ENCODE measurements at regions of chrX and their contacts with region 1.

Region 1: DNA sequence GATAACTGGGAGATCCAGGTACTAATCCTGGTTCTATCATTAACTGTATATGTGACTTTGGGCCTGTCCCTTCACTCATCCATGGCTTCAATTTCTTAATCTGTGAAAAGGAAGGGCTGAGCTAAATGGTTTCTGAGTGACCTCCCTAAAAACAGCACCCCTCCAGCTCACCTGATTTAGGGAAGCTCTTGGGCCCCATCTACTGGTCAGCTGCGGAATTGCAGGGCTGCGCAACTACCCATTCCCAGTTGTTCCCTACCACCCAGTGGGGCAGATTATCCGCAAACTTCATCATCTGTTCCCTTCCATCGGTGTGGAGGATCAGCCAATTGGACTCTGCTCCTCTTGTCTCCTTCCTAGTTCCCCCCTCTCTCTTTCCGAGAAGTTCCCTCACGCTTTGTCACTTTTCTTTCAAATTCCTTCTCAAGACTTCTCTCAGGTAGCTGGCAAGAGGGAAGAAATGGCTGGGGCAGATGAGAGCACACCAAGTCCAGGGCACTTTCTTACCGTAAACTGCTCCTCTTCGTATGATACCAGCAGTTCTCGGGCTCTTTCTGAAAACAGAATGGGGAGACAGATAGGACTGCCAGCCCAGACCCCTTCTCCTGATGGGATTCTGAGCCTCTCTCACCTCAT is 5.8 kb downstream of the LAS1L start:
- DNase-seq: peak; percentile 8
- H3K4me3 Mint-ChIP-seq: no peak overlapping the region
- H3K27ac Mint-ChIP-seq: no peak overlapping the region
- H3K4me1 Mint-ChIP-seq: peaks cover 14% of the 10 kb centered on the region
- H3K27me3 Mint-ChIP-seq: no peaks in the 10 kb centered on the region

Region 2: DNA sequence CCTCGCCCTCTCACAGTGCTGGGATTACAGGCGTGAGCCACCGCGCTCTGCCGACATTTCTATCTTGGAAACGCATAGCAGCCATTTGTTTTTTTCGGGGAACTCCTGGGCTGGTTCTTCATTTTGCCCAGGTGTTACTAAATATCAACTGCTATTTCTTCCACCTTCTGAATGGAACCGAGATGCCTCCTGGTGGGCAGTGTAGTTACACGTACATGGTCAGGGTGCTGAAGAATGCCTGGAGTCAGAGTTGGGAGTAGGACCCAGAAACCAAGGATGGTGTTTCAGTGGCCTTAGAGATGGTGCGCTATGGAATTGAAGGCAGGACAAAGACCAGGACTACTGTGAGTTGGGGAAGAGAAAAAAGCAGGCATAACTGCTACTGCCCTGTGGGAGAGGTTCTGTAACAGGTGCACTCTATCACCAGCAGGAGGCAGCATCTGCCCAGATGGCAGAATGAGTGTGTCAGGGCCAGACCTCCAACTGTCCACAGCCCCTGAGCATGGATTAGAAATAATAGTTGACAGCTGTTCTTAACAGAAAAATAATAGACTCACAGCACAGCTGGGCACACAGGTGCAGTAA is 634.3 kb before region 1 on chrX:
- intact Hi-C with region 1: loop called (anchors 1 kb)
- DNase-seq: no peak
- H3K4me3 Mint-ChIP-seq: no peak overlapping the region
- H3K27ac Mint-ChIP-seq: peak overlapping the region; percentile 71
- H3K4me1 Mint-ChIP-seq: peaks cover 5% of the 10 kb centered on the region
- H3K27me3 Mint-ChIP-seq: no peaks in the 10 kb centered on the region

Region 3: GRCh38 chrX:65420154-65420553 is 108.7 kb before region 1 on chrX:
- intact Hi-C with region 1: no loop called
- DNase-seq: no peak
- H3K4me3 Mint-ChIP-seq: no peak overlapping the region
- H3K27ac Mint-ChIP-seq: no peak overlapping the region
- H3K4me1 Mint-ChIP-seq: no peaks in the 10 kb centered on the region
- H3K27me3 Mint-ChIP-seq: no peaks in the 10 kb centered on the region